MCF 10A (cell line): ENCODE measurements at regions of chr2 and their contacts with region 1.

Region 1: DNA sequence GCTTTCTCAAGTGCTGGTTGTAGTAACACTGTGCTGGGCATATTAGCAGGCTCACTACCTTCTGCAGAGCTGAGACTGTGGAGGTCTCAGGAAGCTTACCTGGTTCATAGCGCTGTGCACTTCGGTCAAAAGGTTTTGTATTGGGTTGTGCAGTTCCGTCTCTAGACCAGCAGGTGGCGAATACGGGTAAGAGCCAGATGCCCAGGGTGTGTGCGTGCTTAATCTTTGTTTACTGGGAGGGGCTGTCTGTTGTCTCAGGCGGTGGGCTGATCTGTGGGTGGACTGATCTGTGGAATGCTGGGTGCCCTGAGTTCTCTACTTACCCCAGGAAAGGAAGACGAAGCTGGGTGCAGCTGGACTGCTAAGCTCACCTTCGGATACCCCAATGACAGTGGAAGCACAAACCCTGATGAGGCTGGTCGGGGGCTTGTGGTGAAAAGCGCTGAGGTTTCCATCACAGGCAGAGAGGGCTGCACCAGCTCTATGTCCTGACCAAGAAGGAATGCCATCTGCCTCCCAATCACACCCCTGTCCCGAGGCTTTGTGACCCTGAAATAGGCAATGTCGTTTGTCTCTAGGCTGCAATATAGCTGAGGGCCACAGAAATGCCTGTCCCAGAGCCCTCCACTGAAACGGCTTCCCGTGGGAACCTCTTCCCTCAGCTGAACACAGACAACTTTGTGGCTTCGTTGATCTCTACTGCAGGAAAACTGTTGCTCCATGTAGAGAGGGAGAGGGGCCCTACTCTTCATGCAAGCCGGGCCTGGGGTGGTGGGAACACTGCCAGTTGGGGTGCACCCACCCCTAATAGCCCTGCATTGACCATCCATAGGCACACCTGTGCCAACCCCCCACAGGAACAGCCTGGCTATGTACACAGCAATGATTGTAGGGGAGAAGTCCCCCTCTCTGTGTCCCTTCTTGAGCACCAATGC is 45.9 kb upstream of the FAM117B start:
- DNase-seq: peak; percentile 75
- H3K4me3 Mint-ChIP-seq: no peak overlapping the region
- H3K27ac Mint-ChIP-seq: no peak overlapping the region
- H3K4me1 Mint-ChIP-seq: peaks cover 7% of the 10 kb centered on the region
- H3K27me3 Mint-ChIP-seq: no peaks in the 10 kb centered on the region
- CTCF ChIP-seq: peak; percentile 96

Region 2: GRCh38 chr2:202238234-202239197 is 350.4 kb before region 1 on chr2 and contains the start of gene SUMO1:
- CTCF ChIA-PET with region 1: no interaction called
- POLR2A ChIA-PET with region 1: no interaction called
- intact Hi-C with region 1: no loop called
- DNase-seq: peak; percentile 90
- H3K4me3 Mint-ChIP-seq: peak within 1 kb of the TSS; percentile 93
- H3K27ac Mint-ChIP-seq: peak within 1 kb of the TSS; percentile 85
- H3K4me1 Mint-ChIP-seq: peaks cover 8% of the 10 kb centered on the region
- H3K27me3 Mint-ChIP-seq: no peaks in the 10 kb centered on the region
- CTCF ChIP-seq: no peak
- total RNA-seq, gene SUMO1: 67.9 and 71.9 TPM in 2 replicates

Region 3: DNA sequence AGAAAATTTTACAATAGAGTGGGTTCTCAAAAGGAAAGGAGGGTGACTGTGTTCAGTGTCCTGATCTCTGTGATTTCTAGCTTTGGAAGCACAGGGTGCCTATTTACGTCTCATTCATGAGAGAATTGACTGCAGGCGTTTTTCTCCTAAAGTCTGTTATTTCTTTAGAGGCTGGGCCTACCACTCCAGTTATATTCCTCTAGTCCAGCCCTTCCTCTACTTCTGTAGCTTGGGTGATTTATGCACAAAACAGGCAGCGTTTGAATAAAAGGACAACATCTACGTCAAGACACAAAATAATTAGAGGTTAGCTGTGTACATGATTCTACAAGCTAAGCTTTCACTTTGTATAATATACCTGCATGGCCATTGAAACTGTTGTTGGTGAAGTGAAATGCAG is 13.4 kb after region 1 on chr2:
- CTCF ChIA-PET with region 1: interaction called, 27 read pairs
- POLR2A ChIA-PET with region 1: interaction called, 4 read pairs
- intact Hi-C with region 1: no loop called
- DNase-seq: no peak
- H3K4me3 Mint-ChIP-seq: no peak overlapping the region
- H3K27ac Mint-ChIP-seq: no peak overlapping the region
- H3K4me1 Mint-ChIP-seq: no peaks in the 10 kb centered on the region
- H3K27me3 Mint-ChIP-seq: no peaks in the 10 kb centered on the region
- CTCF ChIP-seq: no peak

Region 4: DNA sequence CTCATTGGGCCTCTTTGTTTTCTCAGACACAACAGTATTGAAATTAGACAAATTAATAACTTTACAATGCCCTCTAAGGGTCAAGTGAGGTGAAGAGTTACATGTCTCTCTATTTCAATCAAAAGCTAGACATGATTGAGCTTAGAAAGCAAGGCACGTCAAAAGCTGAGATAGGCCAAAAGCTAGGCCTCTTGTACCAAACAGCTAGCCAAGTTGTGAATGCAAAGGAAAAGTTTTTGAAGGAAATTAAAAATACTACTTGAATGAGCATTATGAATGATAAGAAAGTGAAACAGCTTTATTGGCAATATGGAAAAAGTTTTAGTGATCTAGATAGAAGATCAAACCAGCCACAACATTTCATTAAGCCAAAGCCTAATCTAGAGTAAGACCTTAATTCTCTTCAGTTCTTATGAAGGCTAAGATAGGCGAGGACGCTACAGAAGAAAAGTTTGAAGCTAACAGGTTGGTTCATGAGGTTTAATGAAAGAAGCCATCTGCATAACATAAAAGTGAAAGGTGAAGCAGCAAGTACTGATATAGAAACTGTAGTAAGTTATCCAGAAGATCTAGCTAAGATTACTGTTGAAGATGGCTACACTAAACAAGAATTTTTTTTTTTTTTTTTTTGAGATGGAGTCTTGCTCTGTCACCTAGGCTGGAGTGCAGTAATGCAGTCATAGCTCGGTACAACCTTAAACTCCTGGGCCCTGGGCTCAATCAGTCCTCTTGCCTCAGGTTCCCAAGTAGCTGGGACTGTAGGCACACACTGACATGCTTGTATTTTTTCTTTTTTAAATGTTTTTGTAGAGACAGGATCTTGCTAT is 111.4 kb after region 1 on chr2:
- CTCF ChIA-PET with region 1: interaction called, 11 read pairs
- POLR2A ChIA-PET with region 1: no interaction called
- intact Hi-C with region 1: no loop called
- DNase-seq: no peak
- H3K4me3 Mint-ChIP-seq: no peak overlapping the region
- H3K27ac Mint-ChIP-seq: no peak overlapping the region
- H3K4me1 Mint-ChIP-seq: peaks cover 6% of the 10 kb centered on the region
- H3K27me3 Mint-ChIP-seq: no peaks in the 10 kb centered on the region
- CTCF ChIP-seq: no peak

Region 5: GRCh38 chr2:202778217-202778616 is 189.3 kb after region 1 on chr2:
- CTCF ChIA-PET with region 1: no interaction called
- POLR2A ChIA-PET with region 1: no interaction called
- intact Hi-C with region 1: no loop called
- DNase-seq: no peak
- H3K4me3 Mint-ChIP-seq: no peak overlapping the region
- H3K27ac Mint-ChIP-seq: no peak overlapping the region
- H3K4me1 Mint-ChIP-seq: peaks cover 10% of the 10 kb centered on the region
- H3K27me3 Mint-ChIP-seq: no peaks in the 10 kb centered on the region
- CTCF ChIP-seq: no peak

Region 6: DNA sequence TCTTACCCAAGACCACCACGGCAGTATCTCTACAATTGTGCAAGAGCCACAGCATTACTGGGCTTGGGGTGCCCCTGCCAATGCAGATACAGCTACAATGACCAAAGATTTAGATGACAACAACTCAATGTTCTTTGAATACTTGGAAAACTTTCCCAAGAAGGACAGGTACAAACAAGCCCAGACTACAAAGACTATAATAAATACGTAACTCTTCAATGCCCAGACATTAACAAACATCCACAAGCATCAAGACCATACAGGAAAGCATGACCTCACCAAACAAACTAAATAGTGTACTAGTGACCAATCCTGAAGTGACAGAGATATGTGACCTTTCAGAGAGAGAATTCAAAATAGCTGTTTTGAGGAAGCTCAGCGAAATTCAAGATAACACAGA is 219.8 kb after region 1 on chr2:
- CTCF ChIA-PET with region 1: interaction called, 21 read pairs
- POLR2A ChIA-PET with region 1: interaction called, 3 read pairs
- intact Hi-C with region 1: no loop called
- DNase-seq: peak; percentile 54
- H3K4me3 Mint-ChIP-seq: no peak overlapping the region
- H3K27ac Mint-ChIP-seq: peak overlapping the region; percentile 89
- H3K4me1 Mint-ChIP-seq: peaks cover 24% of the 10 kb centered on the region
- H3K27me3 Mint-ChIP-seq: no peaks in the 10 kb centered on the region
- CTCF ChIP-seq: no peak

Region 7: GRCh38 chr2:202831242-202832220 is 242.6 kb after region 1 on chr2:
- CTCF ChIA-PET with region 1: interaction called, 4 read pairs
- POLR2A ChIA-PET with region 1: interaction called, 3 read pairs
- intact Hi-C with region 1: loop called (anchors 1 kb)
- DNase-seq: peak; percentile 84
- H3K4me3 Mint-ChIP-seq: no peak overlapping the region
- H3K27ac Mint-ChIP-seq: no peak overlapping the region
- H3K4me1 Mint-ChIP-seq: peaks cover 8% of the 10 kb centered on the region
- H3K27me3 Mint-ChIP-seq: no peaks in the 10 kb centered on the region
- CTCF ChIP-seq: peak; percentile 46

Region 8: DNA sequence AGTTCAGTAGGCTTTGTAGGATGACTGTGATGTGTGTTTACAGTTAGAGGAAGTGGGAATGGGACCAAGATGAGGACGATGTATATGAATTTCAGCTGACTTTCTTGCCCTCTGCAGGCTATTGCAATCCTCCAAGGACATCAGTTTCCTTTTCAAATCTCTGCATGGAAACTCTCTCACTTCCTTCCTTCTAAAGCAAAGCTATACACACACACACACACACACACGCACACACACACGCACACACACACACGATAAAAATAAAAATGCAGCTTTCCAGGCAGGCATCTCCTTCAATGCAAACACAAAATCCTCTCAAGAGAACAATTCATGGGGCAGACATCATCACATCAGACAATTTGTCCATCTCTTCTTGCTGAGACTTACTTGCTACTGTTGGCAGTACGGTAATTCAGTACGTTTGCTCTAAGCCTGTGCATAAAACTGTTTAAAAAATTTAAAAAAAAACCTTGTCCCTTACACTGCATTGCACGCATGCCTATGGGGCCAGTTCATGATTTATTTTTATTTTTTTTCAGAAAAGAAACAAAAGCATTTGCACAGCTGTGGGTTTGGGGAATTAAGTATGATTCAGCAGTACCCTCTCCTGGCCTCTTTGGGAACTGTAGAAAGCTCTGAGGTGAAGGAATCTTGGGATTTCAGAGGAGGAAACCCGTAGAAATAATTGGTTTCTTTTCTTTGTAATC is 1320.5 kb after region 1 on chr2:
- CTCF ChIA-PET with region 1: interaction called, 4 read pairs
- POLR2A ChIA-PET with region 1: no interaction called
- intact Hi-C with region 1: loop called (anchors 5 kb)
- DNase-seq: peak; percentile 59
- H3K4me3 Mint-ChIP-seq: no peak overlapping the region
- H3K27ac Mint-ChIP-seq: no peak overlapping the region
- H3K4me1 Mint-ChIP-seq: no peaks in the 10 kb centered on the region
- H3K27me3 Mint-ChIP-seq: peaks cover 12% of the 10 kb centered on the region
- CTCF ChIP-seq: peak; percentile 70